ENCODE measurements at regions of chr2 and their contacts with region 1.

Region 1: DNA sequence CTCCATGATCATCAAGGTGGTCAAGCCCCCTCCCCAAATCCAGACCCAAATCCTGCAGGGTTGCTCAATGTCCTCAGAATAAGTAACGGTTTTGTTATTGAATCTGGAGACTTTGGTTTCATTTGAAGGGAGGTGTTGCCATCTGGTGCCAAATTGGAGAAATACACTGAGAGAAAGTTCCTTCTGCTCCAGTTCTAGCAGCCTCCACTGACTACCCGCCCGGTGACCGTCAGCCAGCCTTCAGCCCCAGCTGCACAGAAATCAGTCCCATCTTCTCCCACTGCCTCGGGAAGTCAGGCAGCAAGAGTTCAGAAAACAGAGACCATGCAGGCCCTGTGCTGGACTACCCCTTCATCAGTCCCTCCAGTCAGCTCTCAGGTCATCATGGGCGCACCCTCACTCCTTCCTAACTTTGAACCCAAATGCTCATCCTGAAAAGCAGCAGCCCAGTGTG is 38.7 kb downstream of the PKDCC start:
- DNase-seq: peak; percentile 61 to 78
- H3K4me3 ChIP-seq: no peak overlapping the region
- H3K4me3 Mint-ChIP-seq: no peak overlapping the region
- H3K27ac Mint-ChIP-seq: no peak overlapping the region
- H3K4me1 ChIP-seq: peaks cover 57% of the 10 kb centered on the region
- H3K4me1 Mint-ChIP-seq: peaks cover 66% of the 10 kb centered on the region
- H3K27me3 ChIP-seq: no peaks in the 10 kb centered on the region
- H3K27me3 Mint-ChIP-seq: no peaks in the 10 kb centered on the region
- CTCF ChIP-seq: peak; percentile 74 to 88

Region 2: GRCh38 chr2:41853427-41854216 is 232.9 kb before region 1 on chr2:
- CTCF ChIA-PET with region 1: interaction called, 24 read pairs
- POLR2A ChIA-PET with region 1: no interaction called
- intact Hi-C with region 1: loop called (anchors 1 kb)
- DNase-seq: peak; percentile 70 to 78
- H3K4me3 ChIP-seq: no peak overlapping the region
- H3K4me3 Mint-ChIP-seq: no peak overlapping the region
- H3K27ac Mint-ChIP-seq: peak overlapping the region; percentile 8
- H3K4me1 ChIP-seq: peaks cover 15% of the 10 kb centered on the region
- H3K4me1 Mint-ChIP-seq: peaks cover 2% of the 10 kb centered on the region
- H3K27me3 ChIP-seq: no peaks in the 10 kb centered on the region
- H3K27me3 Mint-ChIP-seq: no peaks in the 10 kb centered on the region
- CTCF ChIP-seq: peak; percentile 82 to 94

Region 3: GRCh38 chr2:41933585-41934320 is 152.8 kb before region 1 on chr2:
- CTCF ChIA-PET with region 1: no interaction called
- POLR2A ChIA-PET with region 1: no interaction called
- intact Hi-C with region 1: loop called (anchors 5 kb)
- DNase-seq: no peak
- H3K4me3 ChIP-seq: no peak overlapping the region
- H3K4me3 Mint-ChIP-seq: no peak overlapping the region
- H3K27ac Mint-ChIP-seq: peak overlapping the region; percentile 80
- H3K4me1 ChIP-seq: peaks cover 53% of the 10 kb centered on the region
- H3K4me1 Mint-ChIP-seq: peaks cover 37% of the 10 kb centered on the region
- H3K27me3 ChIP-seq: no peaks in the 10 kb centered on the region
- H3K27me3 Mint-ChIP-seq: no peaks in the 10 kb centered on the region
- CTCF ChIP-seq: no peak

Region 4: GRCh38 chr2:42063431-42064171 is 22.9 kb before region 1 on chr2:
- CTCF ChIA-PET with region 1: interaction called, 5 read pairs
- POLR2A ChIA-PET with region 1: interaction called, 3 read pairs
- intact Hi-C with region 1: loop called (anchors 1 kb)
- DNase-seq: peak; percentile 85 to 89
- H3K4me3 ChIP-seq: peak overlapping the region; percentile 19; the same call in 1 of the 2 replicates
- H3K4me3 Mint-ChIP-seq: peak overlapping the region; percentile 54
- H3K27ac Mint-ChIP-seq: peak overlapping the region; percentile 96
- H3K4me1 ChIP-seq: peaks cover 79% of the 10 kb centered on the region
- H3K4me1 Mint-ChIP-seq: peaks cover 57% of the 10 kb centered on the region
- H3K27me3 ChIP-seq: no peaks in the 10 kb centered on the region
- H3K27me3 Mint-ChIP-seq: no peaks in the 10 kb centered on the region
- CTCF ChIP-seq: no peak

Measured in Caco-2 (cell line).